ENCODE measurements at regions of chr17 and their contacts with region 1.

Region 1: DNA sequence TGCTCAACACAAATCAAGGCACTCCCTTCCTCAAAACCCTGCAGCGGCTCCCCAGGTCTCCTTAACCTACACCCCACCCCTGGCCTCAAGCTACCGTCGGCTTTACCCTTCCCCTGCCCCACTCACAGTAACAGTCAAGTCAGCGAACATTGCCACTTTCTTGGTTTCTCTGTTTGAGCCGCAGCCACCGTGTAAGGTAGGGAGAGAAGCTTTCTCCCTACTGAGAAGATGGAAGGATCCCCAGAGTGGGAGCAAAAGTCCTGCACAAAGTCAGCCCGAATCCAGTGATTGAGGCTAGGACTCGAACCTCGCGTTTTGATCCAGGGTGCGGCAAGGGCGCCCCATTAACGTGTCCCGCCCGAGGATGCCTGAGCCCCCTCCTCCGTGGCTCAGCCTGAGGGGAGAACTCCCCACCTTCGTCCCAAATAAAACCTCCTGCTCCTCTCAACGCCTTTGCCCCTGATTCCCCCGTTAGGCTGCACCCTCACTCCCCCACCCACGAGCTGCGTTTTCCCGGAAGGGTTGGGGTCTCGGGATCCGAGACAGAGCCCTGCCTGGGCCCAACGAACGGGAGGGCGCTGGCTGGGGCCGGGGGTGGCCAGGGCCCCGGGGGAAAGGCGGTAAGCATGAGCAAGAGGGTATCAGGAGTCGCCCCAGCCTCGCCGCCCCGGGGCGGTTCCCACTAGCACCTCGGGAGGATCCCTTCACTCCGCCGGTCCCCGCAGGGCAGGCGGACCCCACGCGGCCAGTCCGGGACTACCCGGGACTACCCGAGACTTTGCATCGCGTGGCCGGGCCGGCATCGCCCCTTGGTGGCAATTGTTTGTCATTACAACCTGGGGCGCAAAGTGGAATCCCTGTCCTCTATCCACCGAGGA is 9.9 kb upstream of the NAGS start:
- DNase-seq: peak; percentile 52
- H3K4me3 ChIP-seq: no peak overlapping the region
- H3K27ac ChIP-seq: no peak overlapping the region
- H3K4me1 ChIP-seq: no peaks in the 10 kb centered on the region
- CTCF ChIP-seq: peak; percentile 84

Region 2: GRCh38 chr17:43880420-43880991 is 114.0 kb before region 1 on chr17:
- CTCF ChIA-PET with region 1: no interaction called
- POLR2A ChIA-PET with region 1: no interaction called
- intact Hi-C with region 1: loop called (anchors 2 kb)
- DNase-seq: peak; percentile 37
- H3K4me3 ChIP-seq: no peak overlapping the region
- H3K27ac ChIP-seq: no peak overlapping the region
- H3K4me1 ChIP-seq: no peaks in the 10 kb centered on the region
- CTCF ChIP-seq: peak; percentile 81

Region 3: GRCh38 chr17:44123356-44124117 is 129.0 kb after region 1 on chr17 and contains the start of gene HDAC5:
- CTCF ChIA-PET with region 1: no interaction called
- POLR2A ChIA-PET with region 1: no interaction called
- intact Hi-C with region 1: no loop called
- DNase-seq: peak; percentile 96
- H3K4me3 ChIP-seq: peak within 1 kb of the TSS; percentile 85
- H3K27ac ChIP-seq: peak within 1 kb of the TSS; percentile 62
- H3K4me1 ChIP-seq: peaks cover 25% of the 10 kb centered on the region
- CTCF ChIP-seq: peak; percentile 78
- total RNA-seq, gene HDAC5: 26.4 and 41.5 TPM in 2 replicates

Measured in OCI-LY7 (cell line).